ENCODE measurements at regions of chr9 and their contacts with region 1.

Region 1: GRCh38 chr9:91422758-91423711 is 597 bp downstream of the NFIL3 start:
- DNase-seq: peak; percentile 61
- CTCF ChIP-seq: peak; percentile 18

Region 2: GRCh38 chr9:90914868-90915483 is 508.1 kb before region 1 on chr9:
- in situ Hi-C with region 1: loop called (anchors 5 kb)
- DNase-seq: peak; percentile 91
- CTCF ChIP-seq: peak; percentile 74

Region 3: DNA sequence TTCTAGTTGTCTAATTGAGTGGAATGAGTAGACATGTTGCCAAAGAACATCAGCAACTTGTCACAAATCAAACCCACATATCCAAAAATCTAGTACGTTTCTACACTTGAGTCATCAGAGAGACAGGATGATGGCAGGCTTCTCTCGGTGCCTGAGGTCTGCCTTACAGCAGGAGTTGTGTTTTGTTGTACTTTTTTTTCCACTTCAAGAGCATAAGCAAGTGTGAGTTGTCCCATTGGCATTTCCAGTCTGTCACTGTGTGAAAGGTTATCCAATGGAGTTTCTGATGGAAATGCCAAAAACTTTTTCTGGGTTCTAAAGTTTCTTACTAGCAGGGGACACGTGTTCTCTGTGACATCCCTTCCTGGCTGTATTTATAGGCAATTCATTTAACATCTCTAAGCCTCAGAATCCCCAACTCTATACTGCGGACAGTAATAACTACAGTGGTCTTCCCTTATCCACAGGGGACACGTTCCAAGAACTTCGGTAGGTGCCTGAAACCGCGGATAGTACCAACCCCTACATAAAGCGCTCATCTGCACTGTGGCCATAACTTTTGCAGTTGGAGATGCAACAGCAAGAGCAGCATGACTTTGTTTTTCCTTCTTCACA is 374.9 kb before region 1 on chr9:
- in situ Hi-C with region 1: loop called (anchors 10 kb)
- DNase-seq: no peak
- CTCF ChIP-seq: no peak